ENCODE measurements at regions of chr19 and their contacts with region 1.

Region 1: DNA sequence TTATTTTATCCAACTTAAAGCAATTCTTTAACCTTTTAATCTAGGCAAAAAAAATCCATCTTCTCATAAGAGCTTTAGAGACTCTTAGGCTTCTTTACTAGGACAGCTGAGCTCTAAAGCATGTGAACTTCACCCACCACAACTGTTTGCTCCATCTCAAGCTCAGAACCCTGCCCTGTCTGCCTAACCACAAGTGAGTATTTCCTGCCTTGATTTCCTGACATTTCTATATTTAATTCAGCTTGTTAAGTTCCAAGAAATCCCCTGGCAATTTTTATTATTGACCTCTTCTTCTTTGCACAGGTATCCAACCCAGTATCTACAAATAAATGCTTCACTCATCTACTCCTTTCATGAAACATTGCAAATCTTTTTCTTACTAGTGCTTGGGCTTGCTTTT is 21.1 kb upstream of the CEACAM21 start:
- DNase-seq: peak in 6 of 14 experiments; percentile 32 to 84 (median 70)
- ATAC-seq: peak; percentile 72
- H3K4me3 ChIP-seq: peak overlapping the region; percentile 74
- H3K4me3 Mint-ChIP-seq: peak overlapping the region; percentile 97
- H3K27ac ChIP-seq: peak overlapping the region; percentile 42 to 63
- H3K27ac Mint-ChIP-seq: peak overlapping the region; percentile 82
- H3K4me1 ChIP-seq: peaks cover 37% of the 10 kb centered on the region
- H3K4me1 Mint-ChIP-seq: peaks cover 75% of the 10 kb centered on the region
- H3K27me3 ChIP-seq: no peaks in the 10 kb centered on the region
- H3K27me3 Mint-ChIP-seq: no peaks in the 10 kb centered on the region
- CTCF ChIP-seq: no peak

Region 2: DNA sequence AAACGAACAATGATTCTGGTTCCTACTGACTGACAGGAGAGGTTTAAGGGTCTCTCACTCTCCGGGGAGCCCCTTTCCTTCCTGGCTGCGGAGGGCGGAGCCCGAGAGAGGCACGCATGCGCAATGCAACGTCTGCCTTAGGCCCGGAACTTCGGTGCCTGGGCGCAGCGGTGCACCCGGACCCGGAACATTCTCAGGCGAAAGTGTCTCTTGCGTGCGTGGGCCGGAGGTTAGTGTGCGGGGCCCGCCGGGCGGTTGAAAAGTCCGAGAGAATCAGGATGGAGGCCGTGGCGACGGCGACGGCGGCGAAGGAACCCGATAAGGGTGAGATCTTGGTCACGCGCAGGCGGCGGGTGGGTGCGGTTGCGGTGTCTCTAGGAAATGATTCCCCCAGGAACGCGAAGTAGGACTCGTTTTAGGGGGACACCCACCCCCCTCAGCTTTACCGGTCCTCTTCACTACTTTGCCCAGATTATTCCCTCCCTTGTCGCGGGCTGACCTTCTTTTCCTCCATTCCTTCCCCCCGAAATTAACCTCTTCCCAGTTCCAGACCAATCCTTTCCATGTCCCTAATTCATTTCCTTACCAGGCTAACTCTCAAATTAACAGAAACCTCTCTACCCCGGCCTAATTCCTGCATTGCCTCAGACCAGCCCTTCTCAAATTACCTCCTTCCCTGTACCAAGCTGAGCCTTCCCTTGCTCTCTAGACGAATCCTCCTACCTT is 244.7 kb before region 1 on chr19 and contains the start of gene CCDC97:
- CTCF ChIA-PET with region 1: no interaction called
- POLR2A ChIA-PET with region 1: no interaction called
- intact Hi-C with region 1: no loop called
- DNase-seq: peak; percentile 80 to 94 (median 88)
- ATAC-seq: peak; percentile 55
- H3K4me3 ChIP-seq: peak within 1 kb of the TSS; percentile 64
- H3K4me3 Mint-ChIP-seq: peak within 1 kb of the TSS; percentile 95
- H3K27ac ChIP-seq: peak within 1 kb of the TSS; percentile 95 to 97
- H3K27ac Mint-ChIP-seq: peak within 1 kb of the TSS; percentile 97
- H3K4me1 ChIP-seq: peaks cover 80% of the 10 kb centered on the region
- H3K4me1 Mint-ChIP-seq: peaks cover 80% of the 10 kb centered on the region
- H3K27me3 ChIP-seq: no peaks in the 10 kb centered on the region
- H3K27me3 Mint-ChIP-seq: no peaks in the 10 kb centered on the region
- CTCF ChIP-seq: no peak
- total RNA-seq, gene CCDC97: 27.3 to 29.7 TPM

Region 3: DNA sequence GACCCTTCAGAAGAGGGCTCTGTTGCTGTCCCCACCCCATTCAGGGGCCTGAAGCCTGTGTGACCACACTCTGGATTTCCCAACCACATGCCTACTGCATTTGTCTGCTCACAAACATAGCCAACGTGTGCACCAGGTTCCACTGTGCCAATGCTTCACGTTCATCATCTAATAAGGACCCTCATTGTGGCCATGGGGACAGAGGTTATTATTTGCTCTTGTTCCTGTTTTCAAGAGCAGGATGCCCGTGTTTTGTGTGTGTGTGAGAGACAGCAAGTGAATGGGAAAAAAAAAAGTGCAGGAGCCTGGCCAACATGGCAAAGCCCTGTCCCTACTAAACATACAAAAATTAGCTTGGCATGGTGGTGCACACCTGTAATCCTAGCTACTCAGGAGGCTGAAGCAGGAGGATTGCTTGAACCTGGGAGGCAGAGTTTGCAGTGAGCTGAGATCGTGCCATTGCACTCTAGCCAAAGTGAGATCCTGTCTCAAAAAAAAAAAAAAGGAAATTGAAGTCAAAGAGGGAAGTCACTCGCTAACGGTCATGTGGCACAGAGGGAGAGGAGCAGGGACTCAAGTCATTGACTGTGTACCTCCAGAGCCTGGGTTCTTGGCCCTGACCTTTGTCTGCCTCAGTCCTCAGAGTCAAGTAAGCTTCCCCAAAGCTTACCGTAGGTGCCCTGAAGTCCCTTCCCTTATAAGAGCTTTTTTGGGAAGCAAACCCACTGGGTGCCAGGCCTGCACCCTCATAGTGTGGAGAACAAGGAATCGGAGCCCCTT is 134.6 kb before region 1 on chr19:
- CTCF ChIA-PET with region 1: no interaction called
- POLR2A ChIA-PET with region 1: no interaction called
- intact Hi-C with region 1: no loop called
- DNase-seq: peak in 2 of 14 experiments; percentile 41 to 46
- ATAC-seq: no peak
- H3K4me3 ChIP-seq: no peak overlapping the region
- H3K4me3 Mint-ChIP-seq: no peak overlapping the region
- H3K27ac ChIP-seq: no peak overlapping the region
- H3K27ac Mint-ChIP-seq: no peak overlapping the region
- H3K4me1 ChIP-seq: peaks cover 24% of the 10 kb centered on the region
- H3K4me1 Mint-ChIP-seq: no peaks in the 10 kb centered on the region
- H3K27me3 ChIP-seq: no peaks in the 10 kb centered on the region
- H3K27me3 Mint-ChIP-seq: no peaks in the 10 kb centered on the region
- CTCF ChIP-seq: no peak

Region 4: DNA sequence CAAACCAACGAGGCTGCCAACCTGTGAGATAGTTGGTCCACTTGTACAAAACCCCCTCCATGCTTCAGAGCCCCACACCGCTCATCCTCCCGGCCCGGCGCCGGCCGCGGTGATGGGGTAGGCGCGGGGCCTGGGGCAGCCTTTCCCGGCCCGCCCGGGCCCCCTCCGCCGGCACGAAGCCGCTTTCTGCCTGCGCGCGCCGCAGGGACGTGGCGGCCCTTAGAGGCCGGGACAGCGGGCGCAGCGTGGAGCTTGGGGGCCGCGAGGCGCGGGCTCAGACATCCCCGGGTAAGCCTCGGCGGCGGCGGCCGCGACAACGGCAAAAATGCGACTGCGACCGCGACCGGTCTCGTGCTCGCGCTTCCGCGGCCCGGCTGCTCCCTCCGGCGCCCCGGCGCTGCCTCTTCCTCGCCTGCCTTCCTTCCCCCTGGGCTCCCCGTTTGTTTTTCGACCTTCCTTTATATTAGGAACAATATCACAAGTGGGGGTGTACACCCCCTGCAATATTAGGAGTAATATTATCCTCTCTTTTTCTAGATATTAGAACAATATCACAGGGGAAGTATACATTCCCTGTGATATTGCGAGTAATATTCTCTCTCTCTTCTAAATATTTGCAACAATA is 32.9 kb before region 1 on chr19:
- CTCF ChIA-PET with region 1: no interaction called
- POLR2A ChIA-PET with region 1: interaction called, 5 read pairs
- intact Hi-C with region 1: loop called in 1 of 2 experiments (anchors 2 kb)
- DNase-seq: peak in 10 of 14 experiments; percentile 26 to 79 (median 50)
- ATAC-seq: peak; percentile 71
- H3K4me3 ChIP-seq: peak overlapping the region; percentile 52
- H3K4me3 Mint-ChIP-seq: peak overlapping the region; percentile 91
- H3K27ac ChIP-seq: peak overlapping the region; percentile 34 to 36
- H3K27ac Mint-ChIP-seq: peak overlapping the region; percentile 76
- H3K4me1 ChIP-seq: peaks cover 9% of the 10 kb centered on the region
- H3K4me1 Mint-ChIP-seq: peaks cover 26% of the 10 kb centered on the region
- H3K27me3 ChIP-seq: peaks cover 0 to 4% of the 10 kb centered on the region in 2 experiments
- H3K27me3 Mint-ChIP-seq: peaks cover 73% of the 10 kb centered on the region
- CTCF ChIP-seq: no peak

Region 5: DNA sequence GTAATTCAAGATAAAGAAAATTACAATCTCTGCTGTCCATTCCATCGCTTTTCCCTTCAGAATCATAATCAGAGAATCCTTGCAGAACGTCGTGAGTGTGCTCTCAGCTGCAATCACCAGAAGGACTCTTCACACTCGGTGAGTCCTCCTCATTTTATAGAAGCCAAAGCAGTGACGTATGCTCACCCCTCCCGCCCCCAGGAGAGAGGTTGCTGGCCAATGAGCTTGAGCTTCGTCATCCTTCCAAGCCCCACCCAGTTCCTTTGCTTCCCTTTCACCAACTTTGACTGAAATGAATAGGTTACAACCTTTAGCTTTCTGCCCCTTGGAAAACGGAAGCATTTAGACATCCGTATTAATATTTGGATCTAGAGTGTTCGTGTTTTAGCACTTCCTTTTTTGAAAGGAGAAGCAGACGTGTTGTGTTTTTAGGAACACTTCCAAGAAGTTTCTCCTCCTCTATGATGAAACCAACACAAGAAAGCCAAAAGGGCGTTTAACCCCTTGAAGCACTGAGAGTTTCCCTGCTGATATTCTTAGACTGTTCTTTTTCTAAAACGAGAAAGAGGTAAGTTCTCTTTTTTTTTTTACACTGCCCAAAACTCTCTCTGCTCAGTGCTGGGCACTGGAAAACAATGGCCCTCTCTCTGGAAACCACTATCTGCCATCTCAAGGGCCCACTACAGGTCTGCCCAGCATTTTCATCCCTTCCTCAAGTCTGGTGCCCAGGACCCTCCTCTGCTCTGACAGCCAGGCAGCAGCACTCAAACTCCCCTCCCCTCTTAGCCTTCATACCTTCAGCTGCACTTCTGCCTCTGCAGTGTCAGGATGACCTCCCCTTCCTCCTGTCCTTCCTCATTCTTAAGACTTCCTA is 23.2 kb before region 1 on chr19:
- CTCF ChIA-PET with region 1: interaction called, 4 read pairs
- POLR2A ChIA-PET with region 1: interaction called, 37 read pairs
- intact Hi-C with region 1: no loop called
- DNase-seq: peak; percentile 65 to 96 (median 80)
- ATAC-seq: peak; percentile 91
- H3K4me3 ChIP-seq: peak overlapping the region; percentile 42
- H3K4me3 Mint-ChIP-seq: peak overlapping the region; percentile 67
- H3K27ac ChIP-seq: peak overlapping the region; percentile 37 to 63
- H3K27ac Mint-ChIP-seq: peak overlapping the region; percentile 78
- H3K4me1 ChIP-seq: peaks cover 41% of the 10 kb centered on the region
- H3K4me1 Mint-ChIP-seq: peaks cover 51% of the 10 kb centered on the region
- H3K27me3 ChIP-seq: no peaks in the 10 kb centered on the region
- H3K27me3 Mint-ChIP-seq: no peaks in the 10 kb centered on the region
- CTCF ChIP-seq: no peak

Region 6: DNA sequence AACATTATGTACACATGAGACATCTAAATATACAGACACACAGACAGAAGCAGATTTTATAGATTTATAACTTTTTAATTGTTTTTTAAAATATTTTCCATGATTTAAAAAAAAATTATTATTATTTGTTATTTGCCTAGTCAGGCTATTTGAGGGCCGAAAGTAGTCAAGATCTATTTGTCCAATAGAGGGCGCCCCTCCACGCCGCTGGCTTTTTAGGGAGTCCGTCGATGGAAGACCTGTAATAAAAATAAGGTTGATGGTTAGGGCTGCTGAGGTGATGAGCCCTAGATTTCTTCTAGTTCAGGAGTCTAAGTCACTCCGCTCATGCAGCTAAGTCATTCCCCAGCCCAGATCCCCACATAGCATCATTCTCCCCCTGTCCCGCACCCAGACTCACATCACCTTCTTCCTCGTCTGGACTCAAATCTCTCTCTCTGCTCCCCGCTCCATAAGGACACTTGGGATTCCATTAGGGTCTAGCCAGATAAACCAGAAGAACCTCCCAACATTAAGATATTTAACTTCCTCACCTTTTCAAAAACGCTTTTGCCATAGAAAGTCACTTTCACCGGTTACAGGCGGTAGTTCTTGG is 12.8 kb before region 1 on chr19:
- CTCF ChIA-PET with region 1: interaction called, 16 read pairs
- POLR2A ChIA-PET with region 1: interaction called, 286 read pairs
- intact Hi-C with region 1: no loop called
- DNase-seq: peak; percentile 55 to 89 (median 78)
- ATAC-seq: no peak
- H3K4me3 ChIP-seq: no peak overlapping the region
- H3K4me3 Mint-ChIP-seq: peak overlapping the region; percentile 65
- H3K27ac ChIP-seq: no peak overlapping the region
- H3K27ac Mint-ChIP-seq: peak overlapping the region; percentile 66
- H3K4me1 ChIP-seq: peaks cover 46% of the 10 kb centered on the region
- H3K4me1 Mint-ChIP-seq: peaks cover 48% of the 10 kb centered on the region
- H3K27me3 ChIP-seq: no peaks in the 10 kb centered on the region
- H3K27me3 Mint-ChIP-seq: no peaks in the 10 kb centered on the region
- CTCF ChIP-seq: peak; percentile 92

Measured in CD4-positive, alpha-beta T cell (primary cell).